GM10248 (cell line): ENCODE measurements at regions of chr10 and their contacts with region 1.

Region 1: GRCh38 chr10:95430231-95430951 is 130.8 kb downstream of the SORBS1 start:
- DNase-seq: peak; percentile 84
- CTCF ChIP-seq: peak; percentile 89

Region 2: GRCh38 chr10:95374597-95375209 is 55.7 kb before region 1 on chr10:
- CTCF ChIA-PET with region 1: interaction called, 41 read pairs
- POLR2A ChIA-PET with region 1: no interaction called
- DNase-seq: peak; percentile 71
- CTCF ChIP-seq: peak; percentile 96

Region 3: GRCh38 chr10:95400787-95401186 is 29.6 kb before region 1 on chr10:
- CTCF ChIA-PET with region 1: interaction called, 30 read pairs
- POLR2A ChIA-PET with region 1: no interaction called
- DNase-seq: no peak
- CTCF ChIP-seq: no peak

Region 4: DNA sequence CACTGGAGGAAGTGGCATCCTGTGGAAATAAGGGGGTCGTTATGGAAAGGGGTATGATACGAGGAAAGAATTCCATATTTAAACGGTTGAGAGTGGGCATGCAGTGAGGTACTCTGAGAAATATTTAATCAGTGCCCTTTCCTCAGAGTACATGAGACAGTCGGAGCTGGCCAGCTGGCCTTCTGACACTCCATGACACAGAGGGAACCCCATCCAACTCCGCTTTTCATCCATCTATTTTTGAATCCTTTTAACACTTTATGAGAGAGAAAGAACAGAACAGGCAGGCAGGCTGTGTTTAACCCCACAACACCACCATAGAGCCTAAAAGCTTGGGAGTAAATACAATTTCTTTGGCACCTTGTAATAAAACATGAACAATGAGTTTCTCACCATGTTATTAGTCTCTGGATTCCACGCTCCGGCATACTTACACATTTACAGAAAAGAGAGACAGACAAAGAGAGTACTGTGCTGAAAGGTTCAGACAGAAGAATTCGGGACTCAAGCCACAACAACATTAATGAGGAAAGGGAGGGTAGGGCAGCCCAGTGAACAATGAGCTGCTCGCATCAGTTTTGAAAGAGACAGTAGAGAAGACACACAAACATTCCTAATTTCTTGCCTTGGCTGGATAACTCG is 15.4 kb before region 1 on chr10:
- CTCF ChIA-PET with region 1: interaction called, 38 read pairs
- POLR2A ChIA-PET with region 1: interaction called, 3 read pairs
- DNase-seq: no peak
- CTCF ChIP-seq: no peak

Region 5: DNA sequence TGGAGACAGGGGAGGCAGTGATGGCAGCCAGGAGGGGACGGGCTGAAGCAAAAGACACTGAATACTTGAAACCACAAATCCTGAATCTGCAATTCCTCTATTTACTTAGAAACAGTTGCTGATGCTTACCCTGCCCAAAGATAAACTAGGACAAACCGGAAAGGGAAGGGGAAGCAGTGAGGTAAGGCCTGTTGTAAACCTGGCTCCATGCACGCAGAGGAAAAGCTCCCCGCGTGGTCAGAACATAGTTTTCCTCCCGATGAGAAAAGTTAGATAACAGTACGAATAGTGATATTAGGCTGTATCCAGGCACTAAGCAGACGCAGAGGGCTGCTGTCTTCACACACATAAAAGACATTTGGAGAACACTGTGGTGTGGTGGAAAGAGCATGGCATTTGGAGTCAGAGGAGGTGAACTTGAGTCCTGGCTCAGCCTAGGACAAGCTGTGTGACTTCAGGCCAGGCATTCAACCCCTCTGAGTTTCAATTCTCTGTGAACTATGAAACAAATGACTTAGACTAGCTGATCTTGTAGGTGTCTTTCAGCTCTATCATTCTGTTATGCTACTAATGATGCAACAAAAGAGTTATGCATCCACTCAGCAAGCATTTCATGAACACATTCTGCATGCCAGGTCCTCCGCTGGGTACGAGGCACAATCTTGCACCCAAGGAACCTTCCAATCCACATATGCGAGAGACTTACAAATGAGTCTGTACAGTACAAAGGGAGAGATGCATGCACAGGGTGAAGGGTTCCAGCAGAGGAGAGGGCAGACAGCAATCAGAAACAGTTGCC is 49.9 kb after region 1 on chr10:
- CTCF ChIA-PET with region 1: interaction called, 17 read pairs
- POLR2A ChIA-PET with region 1: no interaction called
- DNase-seq: no peak
- CTCF ChIP-seq: no peak

Region 6: GRCh38 chr10:95601116-95601719 is 170.8 kb after region 1 on chr10:
- CTCF ChIA-PET with region 1: interaction called, 100 read pairs
- POLR2A ChIA-PET with region 1: no interaction called
- DNase-seq: peak; percentile 67
- CTCF ChIP-seq: peak; percentile 87